Activated naive CD4-positive, alpha-beta T cell treated with anti-CD3 and anti-CD28 coated beads, Interleukin-2, amount 10 ng/mL, durations not matched to agents 7 days and 5 days (primary cell): ENCODE measurements at regions of chr10 and their contacts with region 1.

Region 1: DNA sequence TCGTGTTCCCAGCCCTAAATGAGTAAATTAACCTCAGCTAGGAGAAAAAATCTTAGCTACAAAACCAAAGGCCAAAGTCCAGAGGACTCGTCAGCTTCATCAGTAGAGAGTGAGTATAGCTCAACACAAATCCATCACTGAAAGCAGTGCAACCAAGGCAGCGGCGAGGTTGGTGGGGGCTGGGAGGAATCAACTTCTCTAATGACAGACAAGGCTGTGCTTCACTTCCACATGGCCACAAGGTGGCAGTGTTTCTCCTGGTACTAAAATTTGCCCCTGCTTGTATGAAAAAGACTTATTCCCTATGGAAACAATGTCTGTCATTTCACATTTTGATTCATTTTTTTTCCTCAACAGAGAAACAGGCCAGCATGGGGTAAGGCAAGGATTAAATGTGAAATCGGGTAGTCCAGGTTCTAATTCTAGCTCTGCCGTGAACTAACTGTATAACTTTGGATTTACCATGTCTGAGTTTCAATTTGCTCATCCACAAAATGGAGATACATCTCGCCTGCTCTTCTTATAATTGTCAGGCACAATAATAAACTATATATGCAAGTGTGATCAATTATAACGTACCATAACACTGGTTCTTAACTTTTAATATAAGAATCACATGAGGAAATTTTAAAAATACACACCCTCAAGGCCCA is 39.3 kb downstream of the FAS start:
- DNase-seq: peak; percentile 81
- H3K4me3 Mint-ChIP-seq: no peak overlapping the region
- H3K27ac Mint-ChIP-seq: no peak overlapping the region
- H3K4me1 Mint-ChIP-seq: peaks cover 11% of the 10 kb centered on the region
- H3K27me3 Mint-ChIP-seq: peaks cover 2% of the 10 kb centered on the region

Region 2: DNA sequence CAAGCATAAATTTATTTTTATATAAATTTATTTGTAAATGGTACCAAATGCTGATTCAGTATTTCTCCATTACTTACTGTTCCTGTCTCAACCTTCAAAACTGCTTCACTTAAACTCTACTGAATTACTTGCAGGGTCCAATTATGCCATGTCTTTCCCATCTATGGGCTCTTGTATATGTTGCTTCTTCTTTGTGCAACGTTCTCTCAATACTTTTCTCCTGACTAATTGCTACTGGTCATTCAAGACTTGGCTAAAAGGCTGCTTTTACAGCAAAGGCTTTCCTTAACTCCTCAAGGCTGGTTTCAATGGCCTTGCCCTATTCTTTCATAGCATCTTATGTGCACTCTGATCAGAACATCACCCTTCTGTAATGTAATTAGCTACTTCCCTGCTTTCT is 514.7 kb before region 1 on chr10:
- CTCF ChIA-PET with region 1: no interaction called
- DNase-seq: no peak
- H3K4me3 Mint-ChIP-seq: no peak overlapping the region
- H3K27ac Mint-ChIP-seq: no peak overlapping the region
- H3K4me1 Mint-ChIP-seq: no peaks in the 10 kb centered on the region
- H3K27me3 Mint-ChIP-seq: peaks cover 6% of the 10 kb centered on the region

Region 3: GRCh38 chr10:89134963-89135362 is 105.1 kb after region 1 on chr10:
- CTCF ChIA-PET with region 1: no interaction called
- DNase-seq: no peak
- H3K4me3 Mint-ChIP-seq: no peak overlapping the region
- H3K27ac Mint-ChIP-seq: no peak overlapping the region
- H3K4me1 Mint-ChIP-seq: no peaks in the 10 kb centered on the region
- H3K27me3 Mint-ChIP-seq: peaks cover 4% of the 10 kb centered on the region

Region 4: DNA sequence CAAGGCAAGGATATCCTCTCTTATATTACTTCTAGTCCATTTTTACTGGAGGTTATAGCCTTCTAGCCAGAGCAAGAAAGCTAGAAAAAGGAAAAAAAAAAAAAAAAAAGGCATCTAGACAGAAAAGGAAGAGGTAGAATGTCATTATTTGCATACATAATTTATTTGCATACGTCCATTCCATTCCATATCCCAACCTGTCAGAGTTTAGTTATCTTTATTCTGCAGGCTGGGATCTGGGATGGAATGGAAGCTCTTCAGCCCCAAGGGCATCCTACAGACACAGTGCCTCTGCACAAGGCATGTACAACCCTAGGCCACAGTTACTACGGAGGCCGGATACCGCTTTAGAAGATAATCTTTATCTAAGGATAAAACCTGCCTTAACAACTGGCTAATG is 167.6 kb after region 1 on chr10:
- CTCF ChIA-PET with region 1: no interaction called
- DNase-seq: no peak
- H3K4me3 Mint-ChIP-seq: no peak overlapping the region
- H3K27ac Mint-ChIP-seq: no peak overlapping the region
- H3K4me1 Mint-ChIP-seq: peaks cover 16% of the 10 kb centered on the region
- H3K27me3 Mint-ChIP-seq: peaks cover 25% of the 10 kb centered on the region

Region 5: DNA sequence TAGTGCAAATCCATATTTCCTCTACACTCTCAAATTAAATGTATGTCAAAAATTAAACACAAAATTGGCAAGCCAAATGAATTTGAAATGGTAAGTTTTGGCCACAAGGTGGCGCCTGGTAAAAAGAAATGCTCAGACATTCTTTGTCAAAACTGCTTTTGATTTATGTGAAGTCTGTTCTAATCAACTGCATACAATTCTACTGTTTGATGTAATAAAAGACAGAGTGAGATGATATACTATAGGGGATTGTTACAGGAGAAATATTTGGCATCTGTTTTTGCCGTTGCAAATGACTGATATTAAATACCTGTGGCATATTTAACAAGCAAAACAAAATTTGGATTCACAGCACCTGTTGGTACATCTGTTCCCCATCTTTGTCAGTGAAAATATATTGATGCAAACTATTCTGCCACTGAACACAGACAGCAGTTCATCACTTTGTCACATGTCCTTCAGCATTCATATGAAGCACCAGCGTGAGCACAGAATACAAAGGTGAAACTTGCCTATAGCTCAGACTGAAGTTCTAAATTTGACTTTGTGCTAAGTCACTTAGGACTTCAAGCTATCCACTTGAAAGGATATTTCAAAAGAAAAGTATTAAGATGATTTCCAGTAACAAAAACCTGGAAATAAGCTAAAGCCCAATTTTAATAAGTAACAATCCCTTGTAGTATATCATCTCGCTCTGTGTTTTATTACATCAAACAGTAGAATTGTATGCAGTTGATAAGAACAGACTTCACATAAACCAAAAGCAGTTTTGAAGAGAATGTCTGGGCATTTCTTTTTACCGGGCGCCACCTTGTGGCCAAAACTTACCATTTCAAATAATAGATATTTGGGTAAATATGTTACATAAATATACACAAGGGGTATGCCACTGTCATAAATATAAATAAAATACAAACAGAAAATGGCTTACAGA is 187.4 kb after region 1 on chr10:
- CTCF ChIA-PET with region 1: interaction called, 62 read pairs
- DNase-seq: peak; percentile 71
- H3K4me3 Mint-ChIP-seq: no peak overlapping the region
- H3K27ac Mint-ChIP-seq: peak overlapping the region; percentile 64
- H3K4me1 Mint-ChIP-seq: peaks cover 13% of the 10 kb centered on the region
- H3K27me3 Mint-ChIP-seq: no peaks in the 10 kb centered on the region